B cell (primary cell): ENCODE measurements at regions of chr12 and their contacts with region 1.

Region 1: DNA sequence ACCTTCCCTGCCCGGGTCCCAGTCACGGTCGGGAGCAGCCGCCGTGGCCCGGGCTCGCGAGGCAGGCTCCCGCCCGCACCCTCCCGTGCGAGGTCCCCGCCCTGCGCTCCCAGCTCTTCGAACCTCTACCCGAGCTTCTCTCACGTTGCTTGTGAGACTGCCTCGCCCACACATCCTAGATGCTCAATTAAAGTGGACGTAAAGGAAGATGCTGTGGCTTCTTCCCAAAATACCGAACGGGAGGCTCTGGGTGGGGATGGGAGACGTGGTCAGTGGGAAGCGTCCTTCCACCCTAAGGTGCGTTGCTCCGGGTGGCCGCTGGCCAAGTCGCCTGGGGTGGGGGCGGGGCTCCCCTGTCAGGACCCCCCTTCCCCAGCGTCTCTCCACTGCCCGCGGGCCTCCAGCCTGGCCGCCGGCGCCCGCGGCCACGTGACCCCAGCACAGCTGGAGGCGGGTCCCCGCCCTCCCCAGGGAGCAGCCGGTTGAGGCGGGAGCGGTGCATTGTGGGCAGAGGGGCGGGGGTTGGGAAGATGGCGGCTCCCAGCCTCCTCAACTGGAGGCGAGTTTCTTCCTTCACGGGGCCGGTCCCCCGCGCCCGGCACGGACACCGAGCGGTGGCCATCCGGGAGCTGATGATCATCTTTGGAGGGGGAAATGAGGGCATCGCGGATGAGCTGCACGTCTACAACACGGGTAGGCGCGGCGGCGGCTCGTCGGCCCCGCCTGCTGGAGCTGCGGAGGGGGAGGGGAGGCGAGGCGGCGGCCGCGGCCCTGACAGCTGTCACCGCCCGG is at the start of gene HCFC2:
- DNase-seq: peak; percentile 94
- ATAC-seq: peak; percentile 92
- H3K4me3 ChIP-seq: peak within 1 kb of the TSS; percentile 80 to 95 (median 85)
- H3K4me3 Mint-ChIP-seq: peak within 1 kb of the TSS; percentile 94
- H3K27ac ChIP-seq: peak within 1 kb of the TSS; percentile 36 to 79
- H3K27ac Mint-ChIP-seq: peak within 1 kb of the TSS; percentile 93
- H3K4me1 ChIP-seq: peaks cover 10 to 14% of the 10 kb centered on the region in 2 donors
- H3K4me1 Mint-ChIP-seq: peaks cover 17% of the 10 kb centered on the region
- H3K27me3 ChIP-seq: no peaks in the 10 kb centered on the region
- H3K27me3 Mint-ChIP-seq: peaks cover 9% of the 10 kb centered on the region
- CTCF ChIP-seq: no peak
- total RNA-seq, gene HCFC2: 10.5 and 11.6 TPM in 2 replicates

Region 2: GRCh38 chr12:104303538-104304151 is 239.4 kb after region 1 on chr12 and contains the start of gene EID3:
- CTCF ChIA-PET with region 1: no interaction called
- POLR2A ChIA-PET with region 1: no interaction called
- intact Hi-C with region 1: loop called (anchors 2 kb)
- DNase-seq: peak; percentile 89
- ATAC-seq: peak; percentile 97
- H3K4me3 ChIP-seq: peak within 1 kb of the TSS; percentile 19 to 74 (median 62)
- H3K4me3 Mint-ChIP-seq: peak within 1 kb of the TSS; percentile 89
- H3K27ac ChIP-seq: peak within 1 kb of the TSS; percentile 54 to 74
- H3K27ac Mint-ChIP-seq: peak within 1 kb of the TSS; percentile 86
- H3K4me1 ChIP-seq: peaks cover 15 to 19% of the 10 kb centered on the region in 2 donors
- H3K4me1 Mint-ChIP-seq: peaks cover 52% of the 10 kb centered on the region
- H3K27me3 ChIP-seq: no peaks in the 10 kb centered on the region
- H3K27me3 Mint-ChIP-seq: no peaks in the 10 kb centered on the region
- CTCF ChIP-seq: no peak
- total RNA-seq, gene EID3: 9.2 and 9.4 TPM in 2 replicates

Region 3: DNA sequence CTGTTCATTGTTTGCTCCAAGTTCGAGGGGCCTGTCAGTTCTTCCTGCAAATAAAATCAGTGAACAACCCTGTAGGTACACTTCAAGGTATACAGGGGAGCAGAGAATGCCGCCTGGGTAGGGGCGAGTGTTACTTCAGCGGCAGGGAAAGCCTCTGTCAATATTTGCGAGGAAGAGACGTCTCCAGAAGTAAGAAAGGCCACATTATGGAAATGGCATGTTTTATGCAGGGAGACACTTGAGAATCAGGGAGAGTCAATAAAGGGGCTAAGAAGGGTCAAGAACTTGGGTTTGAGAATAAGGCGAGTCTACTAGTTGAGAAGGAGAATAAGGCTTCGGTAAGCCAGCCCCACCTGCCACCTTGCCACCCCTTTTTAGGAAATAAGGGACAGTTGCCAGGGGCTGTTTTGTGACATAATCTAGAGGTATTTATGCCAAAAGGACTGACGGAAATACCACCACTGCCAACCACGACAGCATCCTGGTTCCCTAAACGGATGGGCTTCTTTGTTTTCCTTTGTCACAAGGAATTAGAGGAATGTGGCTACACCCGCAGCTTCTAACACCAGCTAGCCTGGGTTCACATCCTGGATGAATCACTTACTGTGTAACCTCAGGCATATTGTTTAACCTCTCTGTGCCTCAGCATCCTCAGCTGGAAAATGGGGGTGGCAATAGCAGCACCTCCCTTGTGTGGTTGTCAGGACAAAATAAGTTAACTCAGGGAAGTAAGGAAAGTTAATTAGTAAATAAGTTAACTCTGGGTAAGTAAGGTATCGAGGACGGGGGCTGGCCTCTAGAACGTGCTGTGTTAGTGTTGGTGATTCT is 307.0 kb after region 1 on chr12:
- CTCF ChIA-PET with region 1: no interaction called
- POLR2A ChIA-PET with region 1: no interaction called
- intact Hi-C with region 1: no loop called
- DNase-seq: no peak
- ATAC-seq: no peak
- H3K4me3 ChIP-seq: no peak overlapping the region
- H3K4me3 Mint-ChIP-seq: no peak overlapping the region
- H3K27ac ChIP-seq: no peak overlapping the region
- H3K27ac Mint-ChIP-seq: no peak overlapping the region
- H3K4me1 ChIP-seq: peaks cover 14 to 15% of the 10 kb centered on the region in 2 donors
- H3K4me1 Mint-ChIP-seq: peaks cover 13% of the 10 kb centered on the region
- H3K27me3 ChIP-seq: no peaks in the 10 kb centered on the region
- H3K27me3 Mint-ChIP-seq: no peaks in the 10 kb centered on the region
- CTCF ChIP-seq: no peak